IMR-90 (cell line): ENCODE measurements at regions of chr14 and their contacts with region 1.

Region 1: GRCh38 chr14:103715052-103716000 is at the starts of genes XRCC3 and ZFYVE21:
- DNase-seq: peak; percentile 99
- ATAC-seq: peak; percentile 93
- H3K4me3 ChIP-seq: peak within 1 kb of the TSS; percentile 83
- H3K27ac ChIP-seq: peak within 1 kb of the TSS; percentile 48
- H3K4me1 ChIP-seq: peaks cover 10% of the 10 kb centered on the region
- H3K27me3 ChIP-seq: no peaks in the 10 kb centered on the region
- CTCF ChIP-seq: no peak
- POLR2A ChIP-seq: peak; percentile 71; the same call in 1 of the 2 replicates
- RAD21 ChIP-seq: no peak
- total RNA-seq, gene XRCC3: 7.5 and 8.1 TPM in 2 replicates
- total RNA-seq, gene ZFYVE21: 41.2 and 41.4 TPM in 2 replicates

Region 2: DNA sequence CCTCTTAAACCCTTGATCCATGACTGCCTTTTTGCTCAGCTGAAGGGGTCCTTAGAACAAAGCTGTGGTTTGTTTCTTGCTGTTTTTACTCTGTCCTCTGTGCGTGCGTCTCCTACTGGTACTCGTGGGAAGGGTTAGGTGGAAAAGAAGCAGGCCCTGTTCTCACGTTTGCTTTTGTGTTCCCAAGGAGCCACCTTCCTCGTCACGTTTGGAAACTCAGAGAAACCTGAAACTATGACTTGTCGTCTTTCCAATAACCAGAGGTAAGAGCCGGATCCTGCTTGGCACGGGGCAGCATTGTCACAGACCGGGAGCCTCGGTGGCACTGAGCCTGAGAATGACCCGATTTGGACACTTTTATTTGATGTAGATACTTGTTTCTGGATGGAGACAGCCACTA is 13.4 kb after region 1 on chr14:
- CTCF ChIA-PET with region 1: no interaction called
- POLR2A ChIA-PET with region 1: interaction called, 11 read pairs
- dilution Hi-C with region 1: no loop called
- in situ Hi-C with region 1: no loop called
- intact Hi-C with region 1: no loop called
- DNase-seq: no peak
- ATAC-seq: no peak
- H3K4me3 ChIP-seq: no peak overlapping the region
- H3K27ac ChIP-seq: no peak overlapping the region
- H3K4me1 ChIP-seq: no peaks in the 10 kb centered on the region
- H3K27me3 ChIP-seq: no peaks in the 10 kb centered on the region
- CTCF ChIP-seq: no peak
- POLR2A ChIP-seq: no peak
- RAD21 ChIP-seq: no peak

Region 3: DNA sequence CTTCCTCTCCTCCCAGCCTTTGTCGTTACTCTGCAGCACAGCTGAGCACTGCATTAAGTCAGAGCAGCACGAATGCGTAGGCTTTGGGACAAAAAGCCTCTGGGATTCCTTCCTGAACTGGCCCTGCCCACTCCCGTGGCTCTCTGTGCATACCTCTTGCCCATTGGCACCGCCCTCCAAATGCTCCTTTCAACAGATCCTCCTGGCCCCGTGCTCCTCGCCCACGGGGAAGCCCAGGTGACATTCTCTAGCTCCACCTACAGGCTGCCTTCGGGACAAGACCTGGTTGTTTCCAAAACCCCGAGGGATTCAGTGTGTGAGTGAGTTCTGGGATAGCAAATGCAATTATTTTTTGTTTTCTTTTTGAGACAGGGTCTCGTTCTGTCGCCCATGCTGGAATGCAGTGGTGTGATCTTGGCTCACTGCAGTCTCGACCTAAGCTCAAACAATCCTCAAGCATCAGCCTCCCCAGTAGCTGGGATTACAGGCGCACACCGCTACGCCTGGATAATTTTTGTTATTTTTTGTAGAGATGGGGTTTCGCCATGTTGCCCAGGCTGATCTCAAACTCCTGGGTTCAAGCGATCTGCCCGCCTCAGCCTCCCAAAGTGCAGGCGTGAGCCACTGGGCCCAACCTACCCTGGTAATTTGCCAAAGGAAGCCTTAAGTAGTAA is 195.1 kb after region 1 on chr14:
- CTCF ChIA-PET with region 1: no interaction called
- POLR2A ChIA-PET with region 1: no interaction called
- dilution Hi-C with region 1: no loop called
- in situ Hi-C with region 1: no loop called
- intact Hi-C with region 1: loop called (anchors 1 kb)
- DNase-seq: peak; percentile 66
- ATAC-seq: peak; percentile 93
- H3K4me3 ChIP-seq: no peak overlapping the region
- H3K27ac ChIP-seq: no peak overlapping the region
- H3K4me1 ChIP-seq: no peaks in the 10 kb centered on the region
- H3K27me3 ChIP-seq: no peaks in the 10 kb centered on the region
- CTCF ChIP-seq: peak; percentile 75
- POLR2A ChIP-seq: no peak
- RAD21 ChIP-seq: peak; percentile 77

Region 4: DNA sequence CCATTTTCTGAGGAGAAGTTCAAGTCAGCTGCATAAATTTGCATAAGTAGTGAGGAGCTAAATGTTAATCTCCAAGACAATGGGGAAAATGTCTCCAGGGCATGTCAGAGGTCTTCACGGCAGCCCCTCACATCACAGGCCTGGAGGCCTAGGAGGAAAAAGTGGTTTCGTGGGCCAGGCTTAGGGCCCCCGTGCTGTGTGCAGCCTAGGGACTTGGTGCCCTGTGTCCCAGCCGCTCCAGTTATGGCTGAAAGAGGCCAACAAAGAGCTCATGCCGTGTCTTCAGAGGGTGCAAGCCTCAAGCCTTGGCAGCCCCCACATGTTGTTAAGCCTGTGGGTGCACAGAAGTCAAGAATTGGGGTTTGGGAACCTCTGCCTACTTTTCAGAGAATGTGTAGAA is 268.9 kb after region 1 on chr14:
- CTCF ChIA-PET with region 1: no interaction called
- POLR2A ChIA-PET with region 1: no interaction called
- dilution Hi-C with region 1: no loop called
- in situ Hi-C with region 1: no loop called
- intact Hi-C with region 1: loop called (anchors 5 kb)
- DNase-seq: no peak
- ATAC-seq: no peak
- H3K4me3 ChIP-seq: no peak overlapping the region
- H3K27ac ChIP-seq: no peak overlapping the region
- H3K4me1 ChIP-seq: no peaks in the 10 kb centered on the region
- H3K27me3 ChIP-seq: no peaks in the 10 kb centered on the region; the same call in none of the 2 replicates
- CTCF ChIP-seq: no peak
- POLR2A ChIP-seq: no peak
- RAD21 ChIP-seq: no peak

Region 5: DNA sequence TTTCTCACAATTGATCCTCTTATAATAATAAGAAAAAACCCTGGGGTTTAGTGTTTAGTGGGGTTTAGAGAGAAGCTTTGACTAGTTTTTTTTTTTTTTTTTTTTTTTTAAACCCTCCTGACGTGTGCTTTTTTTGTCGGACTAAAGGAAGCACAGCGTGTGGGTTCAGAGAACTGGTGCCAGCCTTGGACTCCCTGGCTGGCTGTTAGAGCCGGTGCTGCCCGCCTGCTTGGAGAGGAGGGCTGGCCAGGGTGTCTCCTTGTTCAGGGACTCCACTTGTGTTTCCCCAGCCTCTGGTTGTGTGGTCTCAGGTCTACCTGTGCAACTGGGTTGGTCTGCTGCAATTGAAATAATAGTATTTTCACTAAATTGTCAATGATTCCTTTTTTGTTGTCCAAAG is 316.1 kb after region 1 on chr14:
- CTCF ChIA-PET with region 1: no interaction called
- POLR2A ChIA-PET with region 1: no interaction called
- dilution Hi-C with region 1: no loop called
- in situ Hi-C with region 1: no loop called
- intact Hi-C with region 1: no loop called
- DNase-seq: no peak
- ATAC-seq: no peak
- H3K4me3 ChIP-seq: no peak overlapping the region
- H3K27ac ChIP-seq: no peak overlapping the region
- H3K4me1 ChIP-seq: no peaks in the 10 kb centered on the region
- H3K27me3 ChIP-seq: no peaks in the 10 kb centered on the region
- CTCF ChIP-seq: no peak
- POLR2A ChIP-seq: no peak
- RAD21 ChIP-seq: no peak